Left colon (tissue), 2 donors: ENCODE measurements at regions of chr11 and their contacts with region 1.

Region 1: GRCh38 chr11:10208131-10208575 is 85.9 kb downstream of the SBF2 start:
- DNase-seq: no peak
- ATAC-seq: peak; percentile 70

Region 2: GRCh38 chr11:9982800-9983579 is 225.2 kb before region 1 on chr11:
- intact Hi-C with region 1: no loop called
- DNase-seq: peak; percentile 46 to 52
- ATAC-seq: peak; percentile 59

Region 3: GRCh38 chr11:10032935-10033334 is 175.2 kb before region 1 on chr11:
- intact Hi-C with region 1: no loop called
- DNase-seq: no peak
- ATAC-seq: no peak

Region 4: DNA sequence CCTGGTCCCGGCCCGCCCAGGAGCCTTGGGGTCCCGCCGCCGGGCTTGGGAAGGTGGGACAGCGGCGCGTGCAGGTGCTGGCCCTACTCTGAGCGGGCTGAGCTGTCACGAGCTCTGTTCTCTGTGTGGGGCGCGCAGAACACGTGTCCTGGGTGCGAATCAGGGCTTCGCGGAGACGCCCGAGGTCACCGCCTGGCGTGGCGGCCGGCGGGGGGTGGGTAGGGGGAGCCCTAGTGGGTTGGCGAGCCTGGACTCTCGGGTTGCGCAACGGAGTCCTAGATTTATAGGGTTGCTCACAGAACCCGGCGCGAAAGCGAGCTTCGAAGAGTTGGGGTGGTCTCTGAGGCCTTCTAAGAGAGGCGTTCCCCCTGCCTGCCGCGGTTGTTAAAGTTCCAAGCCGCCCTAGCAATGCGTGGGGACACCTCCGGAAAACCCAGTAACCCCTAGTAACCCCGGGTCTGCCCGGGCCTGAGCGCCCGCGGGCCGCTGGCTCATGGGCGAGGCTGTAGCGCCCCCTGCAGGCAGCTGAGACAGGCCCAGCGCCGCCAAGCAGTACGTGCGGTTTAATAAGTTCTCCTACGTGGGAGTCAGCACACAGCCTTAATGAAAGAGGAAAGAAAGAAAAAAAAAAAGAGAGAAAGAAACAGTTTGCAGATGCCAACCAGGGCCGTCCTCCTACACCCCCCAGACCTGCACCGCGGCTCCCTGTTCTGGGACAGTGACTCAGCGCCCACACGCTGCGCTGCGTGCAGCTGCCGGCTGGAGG is 99.5 kb after region 1 on chr11:
- intact Hi-C with region 1: loop called in 1 of 2 experiments (anchors 5 kb)
- DNase-seq: peak; percentile 84 to 86
- ATAC-seq: peak; percentile 50